HCT116 (cell line): ENCODE measurements at regions of chr17 and their contacts with region 1.

Region 1: DNA sequence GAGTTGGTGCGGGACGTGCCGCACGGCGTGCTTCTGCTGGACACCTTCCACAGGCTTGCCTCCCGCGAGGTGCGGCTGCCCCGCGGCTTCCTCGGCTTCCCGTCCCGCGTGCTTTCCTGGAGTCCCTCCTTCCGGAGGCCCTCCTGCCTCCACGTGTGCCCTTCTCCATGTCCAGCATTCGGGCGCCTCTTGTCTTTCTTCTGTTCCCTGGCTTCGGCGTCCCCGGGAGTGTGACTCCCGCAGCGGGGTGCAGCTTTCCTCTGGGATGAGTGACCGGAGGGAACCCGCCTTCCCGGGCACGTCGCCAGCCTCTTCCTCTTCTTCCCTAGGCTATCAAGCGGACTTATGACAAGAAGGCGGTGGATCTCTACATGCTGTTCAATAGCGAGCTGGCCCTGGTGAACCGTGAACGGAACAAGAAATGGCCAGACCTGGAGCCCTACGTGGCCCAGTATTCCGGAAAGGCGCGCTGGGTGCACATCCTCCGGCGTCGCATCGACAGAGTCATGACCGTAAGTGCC is 23.0 kb downstream of the DNAH2 start:
- DNase-seq: no peak
- ATAC-seq: no peak
- H3K4me3 ChIP-seq: no peak overlapping the region
- H3K27ac ChIP-seq: no peak overlapping the region
- H3K4me1 ChIP-seq: peaks cover 4 to 8% of the 10 kb centered on the region in 2 experiments; a peak in 3 of 4 replicates
- H3K27me3 ChIP-seq: no peaks in the 10 kb centered on the region
- CTCF ChIP-seq: no peak
- POLR2A ChIP-seq: no peak
- RAD21 ChIP-seq: no peak

Region 2: GRCh38 chr17:7782237-7782636 is 41.7 kb after region 1 on chr17:
- CTCF ChIA-PET with region 1: interaction called, 39 read pairs
- POLR2A ChIA-PET with region 1: interaction called, 4 read pairs
- RAD21 ChIA-PET with region 1: interaction called, 4 to 5 read pairs
- intact Hi-C with region 1: loop called (anchors 2 kb)
- DNase-seq: no peak
- ATAC-seq: no peak
- H3K4me3 ChIP-seq: no peak overlapping the region
- H3K27ac ChIP-seq: no peak overlapping the region
- H3K4me1 ChIP-seq: no peaks in the 10 kb centered on the region
- H3K27me3 ChIP-seq: 0 out of 2 replicates have a peak, but pooled peaks cover 6% of the 10 kb centered on the region
- CTCF ChIP-seq: peak; percentile 20 to 86 (median 44); a peak in 5 of 6 replicates
- POLR2A ChIP-seq: no peak
- RAD21 ChIP-seq: peak; percentile 74

Region 3: GRCh38 chr17:7844292-7845154 is 104.0 kb after region 1 on chr17:
- CTCF ChIA-PET with region 1: interaction called, 3 read pairs
- POLR2A ChIA-PET with region 1: no interaction called
- RAD21 ChIA-PET with region 1: no interaction called
- intact Hi-C with region 1: loop called (anchors 5 kb)
- DNase-seq: peak; percentile 90
- ATAC-seq: peak; percentile 77
- H3K4me3 ChIP-seq: peak overlapping the region; percentile 92 to 94
- H3K27ac ChIP-seq: peak overlapping the region; percentile 97
- H3K4me1 ChIP-seq: peaks cover 22 to 34% of the 10 kb centered on the region in 2 experiments
- H3K27me3 ChIP-seq: no peaks in the 10 kb centered on the region
- CTCF ChIP-seq: no peak
- POLR2A ChIP-seq: peak; percentile 51
- RAD21 ChIP-seq: no peak

Region 4: GRCh38 chr17:7851438-7852256 is 111.1 kb after region 1 on chr17:
- CTCF ChIA-PET with region 1: interaction called, 8 read pairs
- POLR2A ChIA-PET with region 1: interaction called, 4 read pairs
- RAD21 ChIA-PET with region 1: interaction called in 1 of 2 experiments, 3 read pairs
- intact Hi-C with region 1: loop called (anchors 2 kb)
- DNase-seq: no peak
- ATAC-seq: peak; percentile 88
- H3K4me3 ChIP-seq: peak overlapping the region; percentile 50 to 77
- H3K27ac ChIP-seq: peak overlapping the region; percentile 68
- H3K4me1 ChIP-seq: peaks cover 20 to 43% of the 10 kb centered on the region in 2 experiments
- H3K27me3 ChIP-seq: no peaks in the 10 kb centered on the region
- CTCF ChIP-seq: peak; percentile 85 to 93 (median 88)
- POLR2A ChIP-seq: peak; percentile 31
- RAD21 ChIP-seq: peak; percentile 98

Region 5: GRCh38 chr17:7912927-7913524 is 172.5 kb after region 1 on chr17:
- CTCF ChIA-PET with region 1: interaction called, 6 read pairs
- POLR2A ChIA-PET with region 1: no interaction called
- RAD21 ChIA-PET with region 1: interaction called in 1 of 2 experiments, 3 read pairs
- intact Hi-C with region 1: loop called (anchors 1 kb)
- DNase-seq: peak; percentile 81
- ATAC-seq: peak; percentile 83
- H3K4me3 ChIP-seq: no peak overlapping the region
- H3K27ac ChIP-seq: no peak overlapping the region
- H3K4me1 ChIP-seq: peaks cover 10 to 28% of the 10 kb centered on the region in 2 experiments; a peak in 3 of 4 replicates
- H3K27me3 ChIP-seq: no peaks in the 10 kb centered on the region
- CTCF ChIP-seq: peak; percentile 80 to 91 (median 86)
- POLR2A ChIP-seq: no peak
- RAD21 ChIP-seq: peak; percentile 92